Gastrocnemius medialis (tissue), 4 donors: ENCODE measurements at regions of chr1 and their contacts with region 1.

Region 1: GRCh38 chr1:91885716-91886506 is at the start of gene TGFBR3:
- DNase-seq: peak; percentile 81 to 84
- ATAC-seq: peak; percentile 82 to 86
- H3K4me3 ChIP-seq: peak within 1 kb of the TSS; percentile 80 to 92 (median 85)
- H3K27ac ChIP-seq: peak within 1 kb of the TSS; percentile 88 to 92 (median 90)
- H3K4me1 ChIP-seq: peaks cover 8 to 16% of the 10 kb centered on the region in 2 donors
- H3K27me3 ChIP-seq: no peaks in the 10 kb centered on the region
- CTCF ChIP-seq: peak; percentile 39 to 65 (median 55)
- POLR2A ChIP-seq: peak; percentile 68 to 89
- total RNA-seq, gene TGFBR3: 37.3 to 61.7 (median 48.4) TPM

Region 2: GRCh38 chr1:91622616-91623015 is 263.3 kb before region 1 on chr1:
- in situ Hi-C with region 1: no loop called
- intact Hi-C with region 1: loop called (anchors 5 kb)
- DNase-seq: peak; percentile 55 to 84
- ATAC-seq: peak; percentile 81
- H3K4me3 ChIP-seq: no peak overlapping the region
- H3K27ac ChIP-seq: peak overlapping the region in 1 of 4 donors; percentile 17
- H3K4me1 ChIP-seq: peaks cover 19 to 27% of the 10 kb centered on the region in 2 donors
- H3K27me3 ChIP-seq: no peaks in the 10 kb centered on the region
- CTCF ChIP-seq: no peak
- POLR2A ChIP-seq: no peak

Region 3: DNA sequence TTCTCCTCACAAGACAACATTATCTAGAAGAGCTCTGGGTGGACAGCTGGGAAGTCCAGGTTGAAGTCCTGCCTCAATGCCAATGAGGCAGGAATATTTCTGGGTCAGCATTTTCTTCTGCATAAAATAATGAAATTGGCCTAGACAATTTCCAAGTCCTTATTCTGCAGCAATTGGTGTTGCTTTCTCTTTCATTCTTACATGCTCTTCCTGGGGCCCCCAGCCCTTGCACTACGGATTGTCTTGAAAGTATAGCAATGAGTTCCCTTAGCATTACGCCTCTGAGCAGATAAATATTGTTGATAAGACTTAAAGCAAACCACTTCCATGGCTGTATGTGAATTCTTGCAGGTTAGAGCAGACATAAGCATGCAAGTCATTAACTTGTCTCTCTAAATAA is 188.5 kb before region 1 on chr1:
- in situ Hi-C with region 1: no loop called
- intact Hi-C with region 1: loop called (anchors 5 kb)
- DNase-seq: no peak
- ATAC-seq: no peak
- H3K4me3 ChIP-seq: no peak overlapping the region
- H3K27ac ChIP-seq: peak overlapping the region in 3 of 4 donors; percentile 32 to 38 (median 32)
- H3K4me1 ChIP-seq: peaks cover 26 to 27% of the 10 kb centered on the region in 2 donors
- H3K27me3 ChIP-seq: no peaks in the 10 kb centered on the region
- CTCF ChIP-seq: no peak
- POLR2A ChIP-seq: no peak

Region 4: GRCh38 chr1:91732291-91733107 is 153.4 kb before region 1 on chr1:
- in situ Hi-C with region 1: no loop called
- intact Hi-C with region 1: loop called (anchors 5 kb)
- DNase-seq: peak; percentile 52 to 63
- ATAC-seq: peak; percentile 31 to 41
- H3K4me3 ChIP-seq: no peak overlapping the region
- H3K27ac ChIP-seq: peak overlapping the region; percentile 56 to 89 (median 64)
- H3K4me1 ChIP-seq: peaks cover 57 to 60% of the 10 kb centered on the region in 2 donors
- H3K27me3 ChIP-seq: no peaks in the 10 kb centered on the region
- CTCF ChIP-seq: no peak
- POLR2A ChIP-seq: no peak

Region 5: DNA sequence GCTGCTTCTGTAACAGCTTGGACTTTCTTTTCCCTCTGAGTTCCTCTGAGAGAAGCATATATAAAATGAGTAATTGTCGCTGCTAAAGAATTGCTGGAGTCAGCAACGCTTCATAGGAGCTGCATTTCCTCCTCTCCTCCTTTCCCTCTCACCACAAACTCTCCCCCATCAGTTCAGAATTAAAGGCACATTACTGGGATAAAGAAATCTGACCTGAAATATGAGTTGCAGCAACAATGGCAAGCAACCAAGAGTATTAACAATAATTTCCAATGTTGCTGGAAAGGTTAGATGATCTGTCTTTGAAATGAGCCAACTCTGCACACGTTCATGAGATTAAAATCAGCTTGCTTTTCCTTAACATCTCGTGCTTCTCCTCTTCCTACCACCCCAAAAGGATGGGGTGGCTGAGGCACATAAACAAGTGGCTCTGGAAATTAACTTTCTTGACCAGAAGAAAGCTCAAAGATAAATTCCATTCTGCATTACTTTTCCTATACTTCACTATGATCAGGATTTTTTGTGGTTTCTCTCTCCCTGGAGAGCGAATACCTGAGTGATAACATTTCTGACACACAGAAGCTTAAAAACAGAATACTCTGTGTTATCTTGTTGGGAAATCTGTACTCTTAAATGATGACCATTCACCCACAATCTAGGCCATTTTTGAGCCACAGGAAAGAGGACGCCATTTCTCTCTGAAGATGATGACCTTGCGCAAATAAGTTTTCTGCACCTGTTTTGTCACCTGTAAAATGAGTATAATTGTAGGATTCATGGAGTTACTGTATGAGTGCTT is 90.1 kb before region 1 on chr1:
- in situ Hi-C with region 1: no loop called
- intact Hi-C with region 1: loop called (anchors 5 kb)
- DNase-seq: no peak
- ATAC-seq: no peak
- H3K4me3 ChIP-seq: no peak overlapping the region
- H3K27ac ChIP-seq: peak overlapping the region in 3 of 4 donors; percentile 35 to 64 (median 59)
- H3K4me1 ChIP-seq: peaks cover 71 to 79% of the 10 kb centered on the region in 2 donors
- H3K27me3 ChIP-seq: no peaks in the 10 kb centered on the region
- CTCF ChIP-seq: no peak
- POLR2A ChIP-seq: no peak

Region 6: DNA sequence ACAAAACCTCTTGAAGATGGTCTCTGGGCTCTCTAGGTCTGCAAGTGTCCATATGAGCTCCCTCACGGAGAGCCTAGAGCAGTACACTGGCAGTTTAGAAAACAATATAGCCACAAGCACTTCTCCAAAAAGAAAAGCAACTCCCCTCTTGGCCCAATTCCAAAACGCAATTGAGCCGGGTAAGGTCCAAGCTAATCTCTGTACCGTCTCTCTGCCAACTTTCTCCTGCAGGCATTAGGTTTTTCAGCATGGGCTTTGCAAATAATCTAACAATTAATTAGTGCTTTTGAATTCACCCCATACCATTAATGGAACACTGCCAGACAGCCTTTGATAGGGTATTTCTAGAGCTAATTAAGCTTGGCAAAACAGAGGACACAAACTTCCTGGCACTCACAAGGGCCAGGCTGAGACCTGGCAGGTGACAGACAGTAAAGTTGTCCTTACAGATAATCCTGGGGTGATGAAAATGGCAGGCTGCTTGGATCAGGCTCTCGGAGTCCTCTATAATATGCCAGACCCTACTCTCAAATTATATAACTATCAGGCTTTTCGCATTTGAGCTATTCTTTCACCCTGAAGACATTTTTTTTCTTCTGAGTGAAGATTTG is 39.8 kb before region 1 on chr1:
- in situ Hi-C with region 1: no loop called
- intact Hi-C with region 1: loop called (anchors 1 kb)
- DNase-seq: peak; percentile 29 to 38
- ATAC-seq: peak; percentile 47 to 51
- H3K4me3 ChIP-seq: peak overlapping the region in 1 of 4 donors; percentile 3
- H3K27ac ChIP-seq: peak overlapping the region; percentile 68 to 75 (median 74)
- H3K4me1 ChIP-seq: peaks cover 30 to 38% of the 10 kb centered on the region in 2 donors
- H3K27me3 ChIP-seq: no peaks in the 10 kb centered on the region
- CTCF ChIP-seq: no peak
- POLR2A ChIP-seq: no peak

Region 7: GRCh38 chr1:91948501-91949355 is 62.8 kb after region 1 on chr1:
- in situ Hi-C with region 1: no loop called
- intact Hi-C with region 1: no loop called
- DNase-seq: no peak
- ATAC-seq: no peak
- H3K4me3 ChIP-seq: no peak overlapping the region
- H3K27ac ChIP-seq: no peak overlapping the region
- H3K4me1 ChIP-seq: no peaks in the 10 kb centered on the region
- H3K27me3 ChIP-seq: no peaks in the 10 kb centered on the region
- CTCF ChIP-seq: no peak
- POLR2A ChIP-seq: no peak

Region 8: GRCh38 chr1:92329347-92330129 is 443.6 kb after region 1 on chr1:
- in situ Hi-C with region 1: no loop called
- intact Hi-C with region 1: no loop called
- DNase-seq: no peak
- ATAC-seq: no peak
- H3K4me3 ChIP-seq: no peak overlapping the region
- H3K27ac ChIP-seq: no peak overlapping the region
- H3K4me1 ChIP-seq: no peaks in the 10 kb centered on the region
- H3K27me3 ChIP-seq: no peaks in the 10 kb centered on the region
- CTCF ChIP-seq: no peak
- POLR2A ChIP-seq: no peak